ENCODE measurements at regions of chr7 and their contacts with region 1.

Region 1: GRCh38 chr7:7344583-7344982 is 162.2 kb downstream of the C1GALT1 start:
- H3K4me3 Mint-ChIP-seq: no peak overlapping the region
- H3K27ac Mint-ChIP-seq: no peak overlapping the region
- H3K4me1 Mint-ChIP-seq: no peaks in the 10 kb centered on the region
- H3K27me3 Mint-ChIP-seq: peaks cover 2% of the 10 kb centered on the region

Region 2: DNA sequence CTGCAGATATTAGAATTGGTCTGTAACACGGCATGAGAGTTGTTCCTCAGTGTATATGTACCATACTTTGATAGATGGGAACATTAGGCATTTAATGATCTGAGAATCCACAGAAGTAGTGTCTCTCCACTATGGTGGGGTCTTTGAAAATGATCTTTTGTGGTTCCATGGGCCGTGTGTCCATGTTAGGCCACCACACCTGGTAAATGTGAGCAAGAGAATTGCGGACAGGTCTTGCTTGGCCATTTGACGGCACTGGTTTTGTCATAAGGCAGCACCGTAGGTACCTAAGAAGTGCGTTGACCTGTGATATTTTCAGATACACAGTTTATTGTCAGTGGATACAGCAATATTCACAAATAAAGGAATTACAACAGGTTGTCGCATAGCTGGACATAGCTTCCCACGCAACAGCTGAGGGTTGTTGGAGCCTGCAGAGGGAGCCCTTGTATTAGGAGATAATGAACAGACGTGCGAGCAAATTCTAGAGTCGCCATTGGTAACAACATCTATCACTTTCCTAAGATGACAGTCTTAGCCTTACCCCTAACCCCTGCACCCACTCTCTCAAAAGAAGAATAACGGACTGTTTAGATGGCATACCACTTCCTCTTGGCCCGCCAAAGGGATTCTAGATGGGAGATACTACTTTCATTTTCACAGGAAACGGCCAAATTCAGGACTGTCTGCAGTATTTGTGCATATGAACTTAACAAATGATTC is 79.7 kb after region 1 on chr7:
- intact Hi-C with region 1: loop called (anchors 10 kb)
- H3K4me3 Mint-ChIP-seq: peak overlapping the region; percentile 46
- H3K27ac Mint-ChIP-seq: no peak overlapping the region
- H3K4me1 Mint-ChIP-seq: no peaks in the 10 kb centered on the region
- H3K27me3 Mint-ChIP-seq: no peaks in the 10 kb centered on the region